ENCODE measurements at regions of chr17 and their contacts with region 1.

Region 1: GRCh38 chr17:41322094-41322902 is 6.8 kb upstream of the KRTAP17-1 start:
- DNase-seq: no peak
- ATAC-seq: peak in 1 of 8 donors; percentile 37
- H3K4me3 ChIP-seq: no peak overlapping the region
- H3K27ac ChIP-seq: no peak overlapping the region
- H3K4me1 ChIP-seq: no peaks in the 10 kb centered on the region
- H3K27me3 ChIP-seq: no peaks in the 10 kb centered on the region
- CTCF ChIP-seq: peak; percentile 30 to 82 (median 64)

Region 2: DNA sequence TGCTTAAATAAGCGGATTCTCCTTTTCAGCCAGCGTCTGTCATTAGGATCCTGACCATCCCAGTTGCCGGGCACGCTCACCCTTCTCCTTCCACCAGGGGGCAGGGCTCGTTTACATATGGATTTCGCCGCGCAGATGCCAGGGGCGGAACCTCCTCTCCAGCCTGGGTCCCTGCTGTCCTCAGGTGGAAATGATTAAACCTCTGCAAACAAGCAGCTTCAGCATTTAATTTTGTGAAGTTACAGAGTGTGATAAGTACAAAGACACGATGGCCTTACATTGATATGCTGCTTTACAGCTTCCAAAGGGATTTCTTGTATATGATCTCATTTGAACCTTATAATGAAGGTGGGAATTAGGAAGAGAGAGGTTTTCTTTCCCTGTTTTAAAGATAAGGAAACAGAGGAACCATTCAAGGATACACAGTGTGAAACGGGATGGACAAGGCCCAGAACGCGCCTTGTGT is 518.6 kb before region 1 on chr17:
- intact Hi-C with region 1: loop called in 2 of 10 experiments (anchors 5 kb)
- DNase-seq: peak; percentile 71 to 74
- ATAC-seq: peak in 7 of 8 donors; percentile 67 to 94 (median 82)
- H3K4me3 ChIP-seq: no peak overlapping the region
- H3K27ac ChIP-seq: no peak overlapping the region
- H3K4me1 ChIP-seq: peaks cover 0 to 8% (median 3%) of the 10 kb centered on the region in 9 donors
- H3K27me3 ChIP-seq: peaks cover 0 to 78% (median 20%) of the 10 kb centered on the region in 7 donors
- CTCF ChIP-seq: peak; percentile 49 to 92 (median 83)

Region 3: DNA sequence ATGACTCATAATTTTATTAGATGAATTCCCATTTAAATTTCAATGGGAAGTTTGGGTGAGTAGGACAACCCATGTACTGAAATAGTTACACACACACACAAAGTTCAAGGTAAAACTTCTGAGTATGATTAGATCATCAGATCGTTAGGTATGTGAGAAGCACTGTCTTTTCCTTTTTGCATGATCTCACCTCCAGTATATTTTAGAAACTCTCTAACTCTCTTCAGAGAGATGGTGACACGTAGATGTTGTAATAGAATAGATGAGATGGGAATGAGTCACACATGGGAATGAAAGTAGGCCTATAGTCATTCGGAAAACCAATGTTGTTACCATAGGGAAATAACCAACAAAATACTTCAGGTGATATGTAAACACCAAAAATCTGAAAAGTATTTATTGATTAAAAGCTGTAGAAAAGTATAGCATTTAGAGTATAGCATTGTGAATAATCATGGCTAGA is 407.1 kb before region 1 on chr17:
- intact Hi-C with region 1: loop called in 6 of 10 experiments (anchors 5 to 10 kb)
- DNase-seq: no peak
- ATAC-seq: no peak
- H3K4me3 ChIP-seq: no peak overlapping the region
- H3K27ac ChIP-seq: no peak overlapping the region
- H3K4me1 ChIP-seq: peaks cover 0 to 35% (median 0%) of the 10 kb centered on the region in 9 donors
- H3K27me3 ChIP-seq: peaks cover 0 to 7% (median 0%) of the 10 kb centered on the region in 7 donors
- CTCF ChIP-seq: no peak

Region 4: GRCh38 chr17:41254861-41255260 is 67.4 kb before region 1 on chr17:
- intact Hi-C with region 1: no loop called
- DNase-seq: no peak
- ATAC-seq: no peak
- H3K4me3 ChIP-seq: no peak overlapping the region
- H3K27ac ChIP-seq: no peak overlapping the region
- H3K4me1 ChIP-seq: no peaks in the 10 kb centered on the region
- H3K27me3 ChIP-seq: peaks cover 0 to 58% (median 41%) of the 10 kb centered on the region in 7 donors
- CTCF ChIP-seq: no peak

Region 5: GRCh38 chr17:41366070-41366469 is 43.8 kb after region 1 on chr17:
- intact Hi-C with region 1: loop called in 1 of 10 experiments (anchors 1 kb)
- DNase-seq: no peak
- ATAC-seq: no peak
- H3K4me3 ChIP-seq: no peak overlapping the region
- H3K27ac ChIP-seq: no peak overlapping the region
- H3K4me1 ChIP-seq: no peaks in the 10 kb centered on the region
- H3K27me3 ChIP-seq: peaks cover 0 to 15% (median 5%) of the 10 kb centered on the region in 7 donors
- CTCF ChIP-seq: no peak

Region 6: GRCh38 chr17:41496820-41497408 is 174.6 kb after region 1 on chr17:
- intact Hi-C with region 1: loop called in 1 of 10 experiments (anchors 10 kb)
- DNase-seq: peak; percentile 48 to 61
- ATAC-seq: peak; percentile 67 to 90 (median 82)
- H3K4me3 ChIP-seq: no peak overlapping the region
- H3K27ac ChIP-seq: peak overlapping the region in 1 of 10 donors; percentile 89
- H3K4me1 ChIP-seq: peaks cover 0 to 57% (median 0%) of the 10 kb centered on the region in 9 donors
- H3K27me3 ChIP-seq: peaks cover 0 to 32% (median 16%) of the 10 kb centered on the region in 7 donors
- CTCF ChIP-seq: peak; percentile 28 to 84 (median 61)

Measured in heart right ventricle (tissue), 16 donors.